ENCODE measurements at regions of chr2 and their contacts with region 1.

Region 1: GRCh38 chr2:241149925-241150659 is at the start of gene PPP1R7:
- DNase-seq: peak; percentile 95
- H3K4me3 ChIP-seq: peak within 1 kb of the TSS; percentile 76 to 85 (median 78)
- H3K27ac ChIP-seq: no peak within 1 kb of the TSS
- H3K4me1 ChIP-seq: peaks cover 15% of the 10 kb centered on the region
- H3K27me3 ChIP-seq: no peaks in the 10 kb centered on the region
- CTCF ChIP-seq: peak in 1 of 2 donors; percentile 16
- POLR2A ChIP-seq: peak; percentile 74
- total RNA-seq, gene PPP1R7: 60.8 and 68.2 TPM in 2 replicates

Region 2: GRCh38 chr2:240991373-240992263 is 158.5 kb before region 1 on chr2:
- CTCF ChIA-PET with region 1: no interaction called
- POLR2A ChIA-PET with region 1: no interaction called
- dilution Hi-C with region 1: no loop called
- intact Hi-C with region 1: loop called (anchors 2 kb)
- DNase-seq: peak; percentile 98
- H3K4me3 ChIP-seq: no peak overlapping the region
- H3K27ac ChIP-seq: peak overlapping the region; percentile 73
- H3K4me1 ChIP-seq: peaks cover 28% of the 10 kb centered on the region
- H3K27me3 ChIP-seq: no peaks in the 10 kb centered on the region
- CTCF ChIP-seq: no peak
- POLR2A ChIP-seq: no peak

Region 3: GRCh38 chr2:241163601-241164118 is 13.6 kb after region 1 on chr2:
- CTCF ChIA-PET with region 1: no interaction called
- POLR2A ChIA-PET with region 1: no interaction called
- dilution Hi-C with region 1: no loop called
- intact Hi-C with region 1: no loop called
- DNase-seq: no peak
- H3K4me3 ChIP-seq: no peak overlapping the region
- H3K27ac ChIP-seq: no peak overlapping the region
- H3K4me1 ChIP-seq: no peaks in the 10 kb centered on the region
- H3K27me3 ChIP-seq: no peaks in the 10 kb centered on the region
- CTCF ChIP-seq: no peak
- POLR2A ChIP-seq: no peak

Region 4: DNA sequence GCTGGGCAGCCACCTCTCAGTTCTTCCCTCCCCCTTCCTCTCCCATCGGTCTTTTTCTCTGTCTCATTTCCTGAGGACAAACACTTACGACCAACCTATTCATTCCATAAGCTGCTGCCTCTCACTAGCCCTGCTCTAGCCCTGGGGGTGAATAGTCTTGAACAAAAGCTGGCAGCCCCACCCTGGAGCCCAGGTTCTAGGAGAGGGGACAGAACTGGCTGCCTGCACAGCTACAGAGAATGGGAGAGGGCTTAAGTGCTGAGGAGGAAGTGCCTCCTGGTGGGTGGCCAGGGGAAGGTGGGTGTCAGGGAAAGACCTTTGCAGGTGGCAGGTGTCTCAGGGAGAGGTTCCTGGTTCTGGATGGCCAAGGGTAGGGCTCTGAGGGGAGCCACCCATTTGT is 61.2 kb after region 1 on chr2:
- CTCF ChIA-PET with region 1: no interaction called
- POLR2A ChIA-PET with region 1: no interaction called
- dilution Hi-C with region 1: no loop called
- intact Hi-C with region 1: loop called (anchors 2 kb)
- DNase-seq: no peak
- H3K4me3 ChIP-seq: no peak overlapping the region
- H3K27ac ChIP-seq: no peak overlapping the region
- H3K4me1 ChIP-seq: no peaks in the 10 kb centered on the region
- H3K27me3 ChIP-seq: no peaks in the 10 kb centered on the region
- CTCF ChIP-seq: no peak
- POLR2A ChIP-seq: no peak

Region 5: DNA sequence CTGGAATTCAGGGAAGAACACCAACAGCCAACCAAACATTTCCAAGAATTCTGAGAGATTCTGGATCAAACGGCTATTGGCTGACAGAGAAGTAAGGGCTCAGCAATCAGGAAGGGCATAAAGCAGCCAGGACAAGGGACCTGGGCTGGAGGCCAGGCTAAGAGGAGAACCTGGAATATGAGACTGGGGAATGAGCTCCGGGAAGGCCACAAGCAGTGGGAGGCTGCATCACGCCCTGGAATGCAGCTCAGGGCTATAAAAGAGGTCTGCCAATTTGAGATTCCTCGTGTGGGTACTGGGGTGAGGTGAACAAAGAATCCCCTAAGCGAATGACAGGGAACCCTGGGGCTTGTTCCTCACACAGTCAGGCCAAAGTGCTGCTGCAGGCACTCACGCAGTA is 98.8 kb after region 1 on chr2:
- CTCF ChIA-PET with region 1: no interaction called
- POLR2A ChIA-PET with region 1: no interaction called
- dilution Hi-C with region 1: no loop called
- intact Hi-C with region 1: no loop called
- DNase-seq: no peak
- H3K4me3 ChIP-seq: no peak overlapping the region
- H3K27ac ChIP-seq: no peak overlapping the region
- H3K4me1 ChIP-seq: no peaks in the 10 kb centered on the region
- H3K27me3 ChIP-seq: no peaks in the 10 kb centered on the region
- CTCF ChIP-seq: no peak
- POLR2A ChIP-seq: no peak

Region 6: GRCh38 chr2:241564596-241565410 is 414.7 kb after region 1 on chr2:
- CTCF ChIA-PET with region 1: no interaction called
- POLR2A ChIA-PET with region 1: no interaction called
- dilution Hi-C with region 1: no loop called
- intact Hi-C with region 1: no loop called
- DNase-seq: no peak
- H3K4me3 ChIP-seq: no peak overlapping the region
- H3K27ac ChIP-seq: no peak overlapping the region
- H3K4me1 ChIP-seq: peaks cover 22% of the 10 kb centered on the region
- H3K27me3 ChIP-seq: no peaks in the 10 kb centered on the region
- CTCF ChIP-seq: no peak
- POLR2A ChIP-seq: no peak